ENCODE measurements at regions of chr4 and their contacts with region 1.

Region 1: GRCh38 chr4:1130316-1131186 is 17.2 kb upstream of the RNF212 start:
- DNase-seq: peak; percentile 64 to 89 (median 72)
- ATAC-seq: peak; percentile 100
- H3K4me3 ChIP-seq: no peak overlapping the region
- H3K4me3 Mint-ChIP-seq: no peak overlapping the region
- H3K27ac ChIP-seq: no peak overlapping the region
- H3K27ac Mint-ChIP-seq: no peak overlapping the region
- H3K4me1 ChIP-seq: peaks cover 3% of the 10 kb centered on the region
- H3K4me1 Mint-ChIP-seq: peaks cover 5% of the 10 kb centered on the region
- H3K27me3 ChIP-seq: peaks cover 0 to 5% of the 10 kb centered on the region in 2 experiments
- H3K27me3 Mint-ChIP-seq: peaks cover 8% of the 10 kb centered on the region
- CTCF ChIP-seq: peak; percentile 99

Region 2: DNA sequence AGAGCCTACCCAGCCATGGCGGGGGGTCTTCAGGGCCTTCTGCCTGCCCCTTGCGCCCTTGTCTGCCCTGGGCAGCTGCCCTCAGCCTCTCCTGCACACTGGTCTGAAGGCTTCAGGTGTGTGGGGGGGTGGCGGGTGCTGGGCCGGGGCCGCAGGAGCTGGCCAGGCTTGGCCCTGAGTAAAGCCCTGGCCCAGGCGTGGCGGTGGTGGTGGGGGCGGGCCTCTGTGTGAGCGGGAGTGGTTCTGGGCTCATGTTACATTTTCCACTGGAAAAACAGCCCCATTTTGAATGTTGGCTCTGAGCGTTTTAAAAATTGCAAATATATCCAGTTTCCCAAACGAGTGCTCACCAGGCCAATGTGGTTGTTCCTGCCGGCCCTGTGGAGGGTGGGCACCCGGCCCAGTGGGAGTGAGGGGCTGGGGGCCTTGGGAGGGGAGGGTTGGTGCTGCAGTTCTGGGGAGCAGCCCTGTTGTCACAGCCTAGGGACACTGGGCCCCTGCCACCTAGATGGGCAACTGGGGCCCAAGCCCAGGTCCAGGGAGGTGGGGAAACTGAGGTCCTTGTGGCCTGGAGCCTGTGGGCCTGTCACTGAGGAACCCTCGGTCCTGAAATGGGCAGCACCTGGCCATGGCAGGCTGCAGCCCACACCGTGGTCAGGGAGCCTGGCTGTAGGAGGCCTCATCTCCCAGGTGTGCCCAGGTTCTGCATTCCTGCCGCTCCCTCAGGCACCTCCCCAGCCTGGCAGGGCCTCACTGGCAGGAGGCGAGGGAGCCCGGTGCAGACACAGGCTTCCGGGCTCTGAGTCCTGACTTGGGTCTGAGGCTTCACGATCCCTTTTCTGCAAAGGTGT is 90.8 kb before region 1 on chr4:
- CTCF ChIA-PET with region 1: no interaction called
- POLR2A ChIA-PET with region 1: no interaction called
- intact Hi-C with region 1: no loop called
- DNase-seq: no peak
- ATAC-seq: no peak
- H3K4me3 ChIP-seq: no peak overlapping the region
- H3K4me3 Mint-ChIP-seq: no peak overlapping the region
- H3K27ac ChIP-seq: no peak overlapping the region
- H3K27ac Mint-ChIP-seq: no peak overlapping the region
- H3K4me1 ChIP-seq: no peaks in the 10 kb centered on the region
- H3K4me1 Mint-ChIP-seq: no peaks in the 10 kb centered on the region
- H3K27me3 ChIP-seq: peaks cover 9 to 13% of the 10 kb centered on the region in 2 experiments
- H3K27me3 Mint-ChIP-seq: peaks cover 10% of the 10 kb centered on the region
- CTCF ChIP-seq: no peak

Region 3: DNA sequence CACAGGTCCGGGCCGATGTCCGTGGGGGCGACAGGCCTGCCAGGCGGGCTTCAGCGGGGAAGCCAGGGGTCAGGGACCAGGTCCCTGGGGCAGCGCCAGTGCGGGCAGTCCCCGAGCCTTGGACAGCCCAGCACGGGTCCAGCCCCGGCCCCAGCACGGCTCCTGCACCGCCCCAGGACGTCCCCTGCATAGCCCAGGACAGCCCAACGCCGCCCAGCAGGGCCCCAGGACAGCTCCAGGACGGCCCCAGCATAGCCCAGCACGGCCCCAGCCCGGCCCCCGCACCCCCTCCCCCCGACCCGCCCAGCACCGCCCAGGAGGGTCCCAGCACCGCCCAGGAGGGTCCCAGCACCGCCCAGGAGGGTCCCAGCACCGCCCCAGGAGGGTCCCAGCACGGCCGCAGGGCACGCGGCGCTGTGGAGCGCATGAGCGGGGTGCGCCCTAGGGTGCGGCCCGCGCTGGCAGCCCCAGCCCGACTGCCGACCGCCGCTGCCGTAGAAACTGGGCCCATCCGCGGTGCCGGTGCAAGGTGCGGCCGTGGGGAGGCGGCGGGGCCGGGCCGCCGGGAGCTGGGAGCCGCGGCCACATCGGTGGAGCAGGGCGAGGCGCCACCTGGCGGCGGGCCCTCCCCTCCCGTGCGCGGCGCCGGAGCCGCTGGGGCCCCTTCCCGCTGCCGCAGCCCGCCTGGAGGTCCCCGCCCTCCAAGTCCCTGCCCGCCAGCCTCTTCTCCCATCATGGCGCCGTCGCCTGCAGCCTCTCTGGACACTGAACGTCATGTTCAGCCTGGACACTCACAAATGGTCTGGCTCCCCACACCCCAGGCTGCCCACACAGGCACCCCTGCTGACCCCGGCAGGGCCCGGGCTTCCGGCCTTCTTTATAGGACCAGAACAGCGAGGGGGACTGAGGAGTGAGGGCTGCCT is 382.4 kb after region 1 on chr4:
- CTCF ChIA-PET with region 1: no interaction called
- POLR2A ChIA-PET with region 1: no interaction called
- intact Hi-C with region 1: loop called in 1 of 2 experiments (anchors 2 kb)
- DNase-seq: peak in 13 of 14 experiments; percentile 14 to 78 (median 43)
- ATAC-seq: peak; percentile 63
- H3K4me3 ChIP-seq: no peak overlapping the region
- H3K4me3 Mint-ChIP-seq: no peak overlapping the region
- H3K27ac ChIP-seq: no peak overlapping the region
- H3K27ac Mint-ChIP-seq: no peak overlapping the region
- H3K4me1 ChIP-seq: peaks cover 4% of the 10 kb centered on the region
- H3K4me1 Mint-ChIP-seq: no peaks in the 10 kb centered on the region
- H3K27me3 ChIP-seq: peaks cover 7 to 19% of the 10 kb centered on the region in 2 experiments
- H3K27me3 Mint-ChIP-seq: peaks cover 18% of the 10 kb centered on the region
- CTCF ChIP-seq: peak; percentile 37

Region 4: DNA sequence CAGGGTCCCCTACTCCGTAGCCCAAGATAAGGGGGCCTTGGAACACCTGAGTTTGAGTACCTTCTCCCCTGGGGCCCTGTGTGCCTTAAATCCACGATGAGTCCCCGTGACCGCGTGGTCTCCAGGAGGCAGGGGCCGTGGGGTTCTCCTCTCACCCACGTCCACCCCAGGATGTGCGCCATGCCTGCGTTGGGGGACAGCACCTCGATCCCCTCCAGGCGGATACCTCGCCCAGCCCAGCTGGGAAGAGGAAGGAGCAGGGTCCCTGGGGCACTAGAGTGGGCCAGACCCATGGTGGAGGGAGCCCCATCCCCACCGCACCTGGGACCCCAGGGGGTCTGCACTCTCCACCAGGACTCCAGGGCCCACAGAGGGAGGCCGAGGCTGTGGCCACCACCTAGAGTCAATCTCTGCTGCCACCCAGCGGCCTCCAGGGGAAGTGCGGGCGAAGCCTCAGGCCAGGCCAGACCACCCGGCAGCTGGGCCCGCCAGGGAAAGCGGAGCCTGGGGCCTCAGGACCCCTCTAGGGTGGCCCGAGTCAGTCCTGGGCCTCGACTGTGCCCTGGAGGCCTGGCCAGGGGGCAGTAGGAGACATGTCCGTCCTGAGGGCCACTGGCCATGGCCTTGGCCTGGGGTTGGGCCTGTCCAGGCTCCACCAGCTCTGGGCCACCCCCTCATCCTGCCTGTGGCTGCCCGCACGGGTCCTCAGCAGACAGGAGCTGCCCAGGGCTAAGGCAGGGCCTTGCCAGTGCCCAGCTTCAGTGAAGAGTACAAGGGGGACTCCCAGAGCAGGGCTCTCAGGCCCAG is 498.5 kb after region 1 on chr4:
- CTCF ChIA-PET with region 1: interaction called, 3 read pairs
- POLR2A ChIA-PET with region 1: no interaction called
- intact Hi-C with region 1: loop called in 1 of 2 experiments (anchors 2 kb)
- DNase-seq: peak; percentile 43 to 84 (median 64)
- ATAC-seq: peak; percentile 76
- H3K4me3 ChIP-seq: no peak overlapping the region
- H3K4me3 Mint-ChIP-seq: no peak overlapping the region
- H3K27ac ChIP-seq: no peak overlapping the region
- H3K27ac Mint-ChIP-seq: no peak overlapping the region
- H3K4me1 ChIP-seq: peaks cover 23% of the 10 kb centered on the region
- H3K4me1 Mint-ChIP-seq: no peaks in the 10 kb centered on the region
- H3K27me3 ChIP-seq: no peaks in the 10 kb centered on the region
- H3K27me3 Mint-ChIP-seq: no peaks in the 10 kb centered on the region
- CTCF ChIP-seq: peak; percentile 98

Measured in CD4-positive, alpha-beta T cell (primary cell).